ENCODE measurements at regions of chr13 and their contacts with region 1.

Region 1: DNA sequence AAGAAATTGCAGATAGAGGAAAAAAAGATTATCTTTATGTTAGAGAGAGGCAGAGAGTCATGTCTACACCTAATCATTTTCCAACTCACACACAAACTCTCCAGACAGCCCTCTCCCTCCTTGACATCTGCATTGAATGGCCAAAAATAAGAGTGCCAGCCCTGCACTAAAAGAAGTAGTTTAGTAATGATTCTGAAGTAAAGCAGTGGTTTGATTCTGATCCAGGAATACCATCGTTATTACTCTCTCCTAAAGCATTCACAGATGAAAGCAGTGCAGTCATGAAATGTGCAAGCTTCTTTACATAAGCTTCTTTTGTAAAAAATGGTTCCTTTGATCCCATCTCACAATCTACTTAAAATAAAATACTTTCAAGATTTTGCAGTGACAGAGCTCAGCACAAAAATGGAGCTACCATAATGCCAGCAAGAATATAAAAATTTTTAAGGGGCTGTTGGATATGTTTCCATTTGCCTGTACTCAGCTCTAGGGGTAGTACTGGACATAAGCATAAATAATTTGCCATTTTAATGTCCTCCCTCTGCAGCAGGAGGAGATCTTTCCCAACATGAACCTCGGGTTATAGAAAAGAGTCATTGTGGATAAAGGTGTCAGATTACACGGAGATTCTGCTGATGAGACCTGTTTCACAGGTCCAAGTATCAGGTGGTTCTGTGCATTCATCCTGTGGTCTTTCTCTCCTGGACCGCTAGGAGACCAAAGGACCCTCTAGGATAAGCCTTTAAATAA is 406.3 kb downstream of the DCT start:
- DNase-seq: no peak
- H3K4me3 ChIP-seq: no peak overlapping the region
- H3K27ac ChIP-seq: no peak overlapping the region
- H3K4me1 ChIP-seq: peaks cover 0 to 15% (median 0%) of the 10 kb centered on the region in 4 donors
- H3K27me3 ChIP-seq: no peaks in the 10 kb centered on the region
- CTCF ChIP-seq: no peak

Region 2: GRCh38 chr13:94088742-94089141 is 15.6 kb after region 1 on chr13:
- intact Hi-C with region 1: loop called (anchors 1 kb)
- DNase-seq: no peak
- H3K4me3 ChIP-seq: no peak overlapping the region
- H3K27ac ChIP-seq: no peak overlapping the region
- H3K4me1 ChIP-seq: no peaks in the 10 kb centered on the region
- H3K27me3 ChIP-seq: no peaks in the 10 kb centered on the region
- CTCF ChIP-seq: no peak

Region 3: GRCh38 chr13:94608586-94608985 is 535.4 kb after region 1 on chr13:
- intact Hi-C with region 1: no loop called
- DNase-seq: no peak
- H3K4me3 ChIP-seq: no peak overlapping the region
- H3K27ac ChIP-seq: no peak overlapping the region
- H3K4me1 ChIP-seq: peaks cover 0 to 5% (median 2%) of the 10 kb centered on the region in 4 donors
- H3K27me3 ChIP-seq: no peaks in the 10 kb centered on the region
- CTCF ChIP-seq: no peak